ENCODE measurements at regions of chr4 and their contacts with region 1.

Region 1: DNA sequence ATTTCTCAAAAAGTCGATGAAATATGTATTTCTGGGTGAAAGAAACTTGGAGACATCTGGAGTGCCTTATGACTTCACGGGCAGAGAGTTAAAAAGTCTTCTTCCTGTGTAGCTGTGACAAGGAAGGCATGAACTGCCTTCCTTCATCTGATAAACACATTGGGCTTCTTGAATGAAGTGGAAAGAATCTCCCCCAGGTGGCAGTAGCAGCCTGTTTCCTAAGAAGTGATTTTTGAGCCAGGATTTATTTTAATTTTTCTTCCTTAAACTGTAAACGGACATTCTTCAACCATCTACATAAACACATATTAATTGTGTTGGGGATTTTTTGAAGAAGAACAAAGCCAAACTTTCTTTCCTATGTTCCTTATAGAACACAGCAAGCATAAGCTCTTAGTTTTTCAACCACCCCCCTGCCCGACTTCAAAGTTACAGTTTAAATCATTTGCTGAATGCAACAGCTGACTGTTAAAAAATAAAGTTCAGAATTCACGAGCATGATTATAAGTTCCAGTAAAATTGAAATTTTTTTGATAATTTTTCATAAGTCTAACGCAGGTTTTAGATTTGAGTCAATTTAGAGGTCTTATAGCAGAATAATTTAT is 980 bp upstream of the GIMD1 start:
- DNase-seq: peak; percentile 66
- H3K4me3 Mint-ChIP-seq: no peak overlapping the region
- H3K27ac Mint-ChIP-seq: no peak overlapping the region
- H3K4me1 Mint-ChIP-seq: no peaks in the 10 kb centered on the region
- H3K27me3 Mint-ChIP-seq: peaks cover 20% of the 10 kb centered on the region

Region 2: DNA sequence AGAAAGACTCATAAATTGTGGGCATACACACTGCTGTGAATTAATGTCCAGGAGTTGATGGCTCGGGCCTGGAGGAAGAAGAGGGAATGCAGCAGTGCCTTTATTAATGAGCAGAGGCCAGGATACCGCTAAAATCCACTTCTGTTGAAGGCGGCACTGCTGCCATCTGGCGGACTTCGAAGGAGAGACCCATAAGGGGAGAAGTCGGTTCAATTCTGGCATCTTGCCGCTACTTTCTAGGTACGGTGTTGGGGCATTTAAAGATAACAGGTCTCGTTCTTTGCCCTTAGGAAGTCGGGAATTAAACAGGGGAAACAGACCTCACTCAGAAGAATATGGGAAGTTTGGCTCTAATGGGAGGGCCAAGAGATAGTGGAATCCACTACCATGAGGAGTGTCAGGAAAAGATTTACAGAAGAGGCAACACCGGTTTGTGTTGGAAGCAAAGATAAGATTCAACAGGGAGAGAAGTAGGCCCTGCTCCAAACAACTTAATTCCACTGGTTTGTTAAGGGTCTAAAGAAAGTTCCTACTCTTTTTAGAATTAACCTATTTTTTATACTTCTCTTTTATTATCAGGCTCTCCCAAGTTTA is 132.6 kb after region 1 on chr4:
- intact Hi-C with region 1: loop called (anchors 1 kb)
- DNase-seq: peak; percentile 79
- H3K4me3 Mint-ChIP-seq: no peak overlapping the region
- H3K27ac Mint-ChIP-seq: peak overlapping the region; percentile 18
- H3K4me1 Mint-ChIP-seq: peaks cover 2% of the 10 kb centered on the region
- H3K27me3 Mint-ChIP-seq: peaks cover 10% of the 10 kb centered on the region

Region 3: GRCh38 chr4:106898621-106899230 is 529.2 kb after region 1 on chr4:
- intact Hi-C with region 1: loop called (anchors 5 kb)
- DNase-seq: peak; percentile 70
- H3K4me3 Mint-ChIP-seq: no peak overlapping the region
- H3K27ac Mint-ChIP-seq: no peak overlapping the region
- H3K4me1 Mint-ChIP-seq: no peaks in the 10 kb centered on the region
- H3K27me3 Mint-ChIP-seq: no peaks in the 10 kb centered on the region